ENCODE measurements at regions of chr12 and their contacts with region 1.

Region 1: DNA sequence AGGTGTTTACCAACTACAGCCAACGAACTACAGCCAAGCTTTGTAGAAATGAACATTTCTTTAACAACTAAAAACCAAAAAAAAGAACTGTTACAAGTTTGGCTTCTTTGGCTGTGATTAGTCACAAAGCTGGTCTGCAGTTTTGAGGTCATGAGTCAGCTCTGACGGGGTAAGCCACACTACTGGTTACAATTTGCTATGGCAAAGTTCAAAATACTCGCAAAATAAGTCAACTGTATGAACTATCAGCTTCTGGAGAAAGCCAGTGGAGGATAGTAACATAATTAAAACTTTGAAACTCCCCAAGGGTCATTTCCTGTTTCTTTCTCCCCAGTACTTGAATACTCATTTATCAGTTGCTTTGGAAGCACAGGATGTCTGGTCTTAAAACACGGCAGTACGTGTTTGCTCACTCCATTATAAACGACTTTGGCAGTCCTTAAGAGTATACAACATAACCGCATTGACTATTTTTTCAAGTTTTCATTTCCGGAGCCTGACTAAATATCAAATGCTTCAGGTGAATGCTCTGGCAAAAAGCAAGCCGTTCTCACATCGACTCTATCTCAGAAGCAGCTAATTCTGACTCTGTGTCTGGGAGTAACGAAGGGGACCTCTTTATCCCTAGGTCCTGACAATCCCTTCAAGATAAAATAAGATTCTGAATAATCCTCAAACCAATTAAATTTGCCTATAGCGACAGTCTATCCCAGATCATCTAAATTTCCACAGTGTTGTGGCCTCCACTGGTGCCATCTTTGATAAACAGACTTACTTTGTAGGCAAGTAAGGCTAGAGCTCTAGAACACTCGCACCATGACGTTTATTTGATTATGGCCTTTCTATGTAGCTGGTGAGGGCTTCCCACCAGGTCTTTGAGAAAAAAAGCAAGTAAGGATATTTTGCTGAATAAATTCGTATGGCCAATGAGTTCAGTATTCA is 10.6 kb downstream of the PHLDA1 start:
- DNase-seq: peak; percentile 85 to 94 (median 94)
- H3K4me3 ChIP-seq: peak overlapping the region in 1 of 7 experiments; percentile 14
- H3K27ac ChIP-seq: peak overlapping the region; percentile 62 to 88
- H3K4me1 ChIP-seq: peaks cover 13 to 27% (median 20%) of the 10 kb centered on the region in 4 experiments
- H3K27me3 ChIP-seq: peaks cover 0 to 10% (median 2%) of the 10 kb centered on the region in 5 experiments

Region 2: DNA sequence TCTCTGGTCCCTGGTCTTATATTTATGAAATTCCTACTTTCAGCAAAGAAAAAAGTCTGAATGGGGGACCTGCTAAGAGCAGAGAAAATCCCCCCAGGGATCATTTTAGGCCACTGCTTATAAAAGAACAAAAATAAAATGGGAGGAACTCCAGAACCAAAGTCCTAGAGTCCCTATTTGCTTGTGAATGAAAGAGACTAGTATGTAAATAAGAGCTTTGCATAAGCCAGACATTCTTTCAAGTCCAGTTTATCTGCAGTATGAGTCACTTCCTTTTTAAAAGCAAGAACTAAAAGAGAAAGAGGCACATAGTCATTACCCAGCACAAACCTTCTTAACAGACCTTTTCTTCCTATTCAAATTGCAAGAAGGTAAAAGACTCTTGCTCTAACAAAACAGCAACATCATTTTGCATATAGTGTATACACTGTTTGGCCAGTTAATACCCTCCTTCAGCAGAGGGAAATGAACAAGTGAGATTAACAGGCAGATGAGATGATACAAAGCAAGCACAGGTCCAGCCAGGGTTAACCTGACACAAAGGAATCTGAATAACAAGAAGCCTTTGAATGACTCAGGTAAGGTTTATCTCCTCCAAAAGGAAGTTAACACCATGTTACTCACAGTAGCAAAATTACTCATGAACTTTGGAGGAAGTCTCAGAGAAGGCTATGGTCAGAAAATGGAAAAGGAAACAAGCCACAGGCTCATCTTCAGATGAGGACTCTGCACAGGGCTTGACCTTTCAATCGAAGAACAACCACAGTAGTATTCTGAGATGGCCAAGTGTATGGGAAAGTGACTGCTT is 76.7 kb before region 1 on chr12:
- CTCF ChIA-PET with region 1: no interaction called
- POLR2A ChIA-PET with region 1: no interaction called
- DNase-seq: peak; percentile 48 to 82 (median 75)
- H3K4me3 ChIP-seq: peak overlapping the region in 1 of 7 experiments; percentile 8
- H3K27ac ChIP-seq: peak overlapping the region in 1 of 2 experiments; percentile 43
- H3K4me1 ChIP-seq: peaks cover 0 to 11% (median 2%) of the 10 kb centered on the region in 4 experiments
- H3K27me3 ChIP-seq: peaks cover 0 to 6% (median 3%) of the 10 kb centered on the region in 5 experiments

Region 3: DNA sequence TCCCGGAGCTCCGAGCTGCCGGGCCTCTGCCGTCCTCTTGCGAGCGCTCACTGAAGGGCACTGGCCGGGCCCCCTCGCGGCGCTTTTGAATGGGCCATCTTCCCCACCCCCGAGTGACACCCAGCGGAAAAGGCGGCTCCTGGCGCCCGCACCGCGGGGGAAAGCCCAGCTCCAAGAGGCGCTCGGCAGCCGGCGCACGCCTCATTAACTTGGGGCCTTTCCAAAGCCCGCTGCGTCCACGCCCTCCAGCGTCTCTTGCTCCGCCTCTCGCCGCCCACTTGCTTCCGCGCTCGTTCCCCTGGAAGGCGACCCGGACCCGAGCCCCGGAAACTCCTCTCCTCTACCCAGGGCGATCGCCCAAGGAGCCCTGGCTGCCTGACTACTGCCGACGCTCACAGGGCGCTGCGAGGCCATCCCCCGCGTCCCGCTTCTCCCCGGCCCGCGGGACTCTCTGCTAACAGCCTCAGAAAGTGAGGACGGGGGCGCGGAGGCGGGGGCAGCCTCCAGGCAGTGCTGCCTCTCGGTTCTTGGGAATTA is 10.6 kb after region 1 on chr12 and contains the start of gene PHLDA1:
- CTCF ChIA-PET with region 1: interaction called, 21 read pairs
- POLR2A ChIA-PET with region 1: interaction called, 6 read pairs
- DNase-seq: peak; percentile 81 to 91 (median 90)
- H3K4me3 ChIP-seq: peak within 1 kb of the TSS; percentile 51 to 83 (median 77)
- H3K27ac ChIP-seq: peak within 1 kb of the TSS in 1 of 2 experiments; percentile 64
- H3K4me1 ChIP-seq: peaks cover 0 to 33% (median 30%) of the 10 kb centered on the region in 4 experiments
- H3K27me3 ChIP-seq: peaks cover 28 to 74% (median 34%) of the 10 kb centered on the region in 5 experiments